GM10248 (cell line): ENCODE measurements at regions of chr2 and their contacts with region 1.

Region 1: DNA sequence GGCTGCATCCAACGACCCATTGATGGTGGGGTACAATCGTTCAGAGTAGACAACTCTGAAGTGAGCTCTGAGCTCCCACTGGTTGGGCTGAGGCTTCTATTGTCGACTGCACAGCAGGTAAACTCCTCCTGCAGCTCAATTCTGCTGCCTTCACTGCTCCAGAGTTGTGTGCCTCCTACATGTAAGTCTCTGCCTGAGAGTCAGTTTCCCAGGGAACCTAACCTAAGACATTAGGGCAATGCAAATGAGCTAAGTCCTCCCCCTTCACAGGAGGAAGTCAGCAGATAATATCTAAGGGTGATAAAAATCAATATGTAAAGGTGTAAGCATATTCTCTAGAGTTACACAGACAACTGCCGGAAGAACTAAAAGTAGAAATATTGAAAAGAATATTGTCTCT is 22.5 kb upstream of the ACYP2 start:
- DNase-seq: peak; percentile 21
- CTCF ChIP-seq: no peak

Region 2: DNA sequence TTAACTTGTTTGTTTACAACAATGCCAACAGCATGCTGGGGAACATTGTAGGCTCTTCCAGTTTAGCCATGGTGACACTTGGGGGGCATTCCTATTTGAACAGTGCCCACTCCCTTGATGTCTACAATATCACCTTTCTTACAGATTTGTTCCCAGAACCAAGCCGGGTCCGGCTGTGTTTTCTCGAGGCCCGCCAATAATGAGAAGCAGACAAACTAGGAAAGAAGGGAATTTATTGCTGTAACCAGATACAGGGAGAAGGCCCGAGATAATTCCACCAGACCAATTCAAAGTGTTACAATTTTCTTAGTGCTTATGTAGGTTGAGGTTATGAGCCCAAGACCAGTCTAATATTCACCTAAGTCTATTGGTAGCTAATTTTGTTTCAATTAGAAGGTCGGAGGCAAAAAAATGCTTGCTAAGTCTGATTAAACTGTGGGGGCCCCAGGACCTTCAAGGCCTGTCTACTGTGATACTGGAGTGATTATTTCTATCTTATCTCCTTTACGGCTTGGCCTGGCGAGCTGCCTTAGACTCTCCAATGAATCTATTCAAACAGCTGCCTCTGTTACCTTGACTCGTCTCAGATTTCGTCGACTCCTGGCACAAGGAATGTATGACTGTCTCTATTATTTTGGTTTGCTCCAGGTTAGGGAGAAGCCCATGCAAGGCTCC is 63.1 kb before region 1 on chr2:
- CTCF ChIA-PET with region 1: no interaction called
- POLR2A ChIA-PET with region 1: no interaction called
- DNase-seq: no peak
- CTCF ChIP-seq: no peak

Region 3: DNA sequence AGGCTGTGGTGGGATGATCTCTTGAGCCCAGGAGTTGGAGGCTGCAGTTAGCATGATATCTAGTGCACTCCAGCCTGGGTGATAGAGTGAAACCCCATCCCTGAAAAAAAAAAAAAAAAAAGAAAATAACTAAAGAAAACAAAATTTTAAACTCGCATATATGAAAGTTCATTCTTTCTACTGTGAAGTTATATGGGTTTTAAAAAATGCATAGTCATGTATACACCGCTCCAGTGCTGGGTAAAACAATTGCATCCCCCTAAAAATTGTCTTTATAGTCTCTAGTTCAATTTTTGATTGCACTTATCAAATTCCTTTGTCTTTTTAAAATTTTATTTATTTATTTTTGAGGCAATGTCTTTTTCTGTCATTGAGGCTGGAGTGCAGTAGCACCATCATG is 42.5 kb before region 1 on chr2:
- CTCF ChIA-PET with region 1: no interaction called
- POLR2A ChIA-PET with region 1: no interaction called
- DNase-seq: no peak
- CTCF ChIP-seq: no peak

Region 4: GRCh38 chr2:54106631-54107454 is 13.9 kb after region 1 on chr2:
- CTCF ChIA-PET with region 1: interaction called, 29 read pairs
- POLR2A ChIA-PET with region 1: no interaction called
- DNase-seq: peak; percentile 42
- CTCF ChIP-seq: peak; percentile 66

Region 5: GRCh38 chr2:54122939-54123338 is 30.0 kb after region 1 on chr2:
- CTCF ChIA-PET with region 1: no interaction called
- POLR2A ChIA-PET with region 1: no interaction called
- DNase-seq: no peak
- CTCF ChIP-seq: no peak